A549 (cell line): ENCODE measurements at regions of chr9 and their contacts with region 1.

Region 1: GRCh38 chr9:126939821-126940221 is 25.2 kb downstream of the RALGPS1 start:
- DNase-seq: peak; percentile 46 to 50
- ATAC-seq: peak; percentile 48 to 57; a peak in 4 of 6 replicates
- H3K4me3 ChIP-seq: no peak overlapping the region
- H3K27ac ChIP-seq: no peak overlapping the region
- H3K4me1 ChIP-seq: peaks cover 12% of the 10 kb centered on the region
- CTCF ChIP-seq: no peak
- EP300 ChIP-seq: no peak
- POLR2A ChIP-seq: no peak
- RAD21 ChIP-seq: no peak

Region 2: GRCh38 chr9:126927419-126927818 is 12.4 kb before region 1 on chr9:
- CTCF ChIA-PET with region 1: interaction called, 43 read pairs
- POLR2A ChIA-PET with region 1: no interaction called
- DNase-seq: no peak
- ATAC-seq: no peak
- H3K4me3 ChIP-seq: no peak overlapping the region
- H3K27ac ChIP-seq: no peak overlapping the region
- H3K4me1 ChIP-seq: no peaks in the 10 kb centered on the region
- CTCF ChIP-seq: no peak
- EP300 ChIP-seq: no peak
- POLR2A ChIP-seq: no peak
- RAD21 ChIP-seq: no peak

Region 3: DNA sequence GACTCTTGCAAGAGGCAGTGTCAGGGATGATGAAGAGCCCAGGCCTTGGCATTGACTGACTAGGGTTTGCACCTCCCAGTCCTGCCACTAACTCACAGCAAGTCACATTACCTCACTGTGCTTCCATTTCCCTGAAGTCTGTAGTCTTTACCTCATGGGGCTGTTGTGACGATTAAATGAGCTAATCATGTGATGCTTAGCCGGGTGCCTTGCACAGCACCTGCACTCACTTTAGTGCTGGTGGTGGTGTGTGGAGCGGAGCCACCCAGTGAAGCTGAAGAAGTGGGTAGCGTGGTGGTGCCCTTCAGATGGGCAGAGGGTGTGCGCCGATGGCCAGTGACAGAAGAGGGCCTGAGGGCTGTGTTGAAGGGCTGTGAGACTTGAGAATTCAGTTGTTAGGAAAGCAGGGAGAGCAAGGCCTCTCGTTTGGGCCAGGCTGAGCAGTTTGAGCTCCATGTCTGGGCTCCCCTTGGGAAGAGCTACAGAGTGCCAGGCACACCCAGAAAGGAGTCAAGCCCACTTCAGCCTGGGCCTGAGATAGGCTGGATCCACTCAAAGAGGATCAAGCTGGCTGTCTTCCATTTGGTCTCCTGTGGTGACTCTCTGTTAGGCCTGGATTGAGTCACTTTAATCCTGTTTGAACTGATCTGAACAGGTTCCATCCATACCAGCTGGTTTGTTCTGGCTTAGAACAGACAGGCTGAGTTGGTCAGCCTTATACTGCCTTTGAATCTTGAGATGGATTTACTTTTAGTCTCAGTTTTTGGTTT is 17.3 kb after region 1 on chr9:
- CTCF ChIA-PET with region 1: interaction called, 59 read pairs
- POLR2A ChIA-PET with region 1: no interaction called
- DNase-seq: peak; percentile 17 to 26
- ATAC-seq: peak; percentile 65 to 68
- H3K4me3 ChIP-seq: no peak overlapping the region
- H3K27ac ChIP-seq: peak overlapping the region in 1 of 2 experiments; percentile 7; a peak in 1 of 6 replicates
- H3K4me1 ChIP-seq: peaks cover 14% of the 10 kb centered on the region
- CTCF ChIP-seq: no peak
- EP300 ChIP-seq: no peak
- POLR2A ChIP-seq: no peak
- RAD21 ChIP-seq: no peak

Region 4: GRCh38 chr9:126965541-126966428 is 26.0 kb after region 1 on chr9:
- CTCF ChIA-PET with region 1: interaction called, 59 read pairs
- POLR2A ChIA-PET with region 1: no interaction called
- DNase-seq: peak; percentile 67 to 80
- ATAC-seq: peak; percentile 99 to 100
- H3K4me3 ChIP-seq: no peak overlapping the region
- H3K27ac ChIP-seq: no peak overlapping the region
- H3K4me1 ChIP-seq: peaks cover 4% of the 10 kb centered on the region; the same call in 1 of the 3 replicates
- CTCF ChIP-seq: peak; percentile 87
- EP300 ChIP-seq: no peak
- POLR2A ChIP-seq: no peak
- RAD21 ChIP-seq: peak; percentile 91 to 92

Region 5: GRCh38 chr9:127159325-127159801 is 219.5 kb after region 1 on chr9:
- CTCF ChIA-PET with region 1: interaction called, 22 read pairs
- POLR2A ChIA-PET with region 1: no interaction called
- DNase-seq: peak; percentile 19 to 74
- ATAC-seq: peak; percentile 87
- H3K4me3 ChIP-seq: no peak overlapping the region
- H3K27ac ChIP-seq: peak overlapping the region; percentile 36 to 60
- H3K4me1 ChIP-seq: peaks cover 25% of the 10 kb centered on the region
- CTCF ChIP-seq: no peak
- EP300 ChIP-seq: no peak
- POLR2A ChIP-seq: no peak
- RAD21 ChIP-seq: no peak

Region 6: DNA sequence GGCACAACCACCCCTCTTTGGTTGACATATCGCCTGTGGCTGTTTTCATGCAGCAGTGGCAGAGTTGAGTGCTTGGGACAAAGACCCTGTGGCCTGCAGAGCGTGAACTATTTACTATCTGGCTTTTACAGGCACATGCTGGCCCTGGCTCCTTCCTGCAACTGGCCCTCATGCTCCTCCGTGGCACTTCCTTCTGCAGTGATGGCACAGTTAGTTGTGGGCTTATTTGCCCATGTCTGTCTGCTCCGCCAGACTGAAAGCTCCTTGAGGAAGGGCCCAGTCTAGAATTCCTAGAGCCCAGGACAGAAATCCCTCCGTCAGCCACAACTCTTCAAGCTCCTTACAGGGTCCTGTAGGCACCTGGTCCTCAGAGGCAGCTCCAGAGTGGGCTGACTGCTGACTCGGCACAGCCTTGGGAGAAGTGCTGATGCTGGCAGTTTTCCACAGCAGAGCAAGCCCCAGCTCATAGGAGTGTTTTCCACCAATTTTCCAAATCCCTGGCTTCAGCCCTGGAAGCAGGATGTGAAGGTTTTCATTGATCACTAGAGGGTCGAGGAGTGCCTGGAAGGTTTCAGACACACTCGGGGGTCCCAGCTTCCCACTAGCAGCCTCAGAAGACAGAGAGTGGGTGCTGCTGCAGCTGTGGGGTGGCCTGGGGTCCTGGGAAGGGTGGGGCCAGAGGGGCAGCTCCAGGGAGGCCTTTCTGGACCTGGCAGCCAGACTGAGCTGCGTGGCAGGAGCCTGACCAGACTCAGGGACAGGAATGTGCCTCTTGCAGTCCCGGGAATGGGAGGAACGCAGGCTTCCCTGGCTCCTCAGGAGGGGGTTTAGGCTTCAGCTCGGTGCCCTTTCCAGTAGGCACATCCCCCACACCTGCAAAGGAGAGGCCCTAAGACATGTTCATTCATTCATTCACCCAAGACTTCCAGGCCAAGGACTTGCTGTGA is 239.1 kb after region 1 on chr9:
- CTCF ChIA-PET with region 1: interaction called, 15 read pairs
- POLR2A ChIA-PET with region 1: no interaction called
- DNase-seq: no peak
- ATAC-seq: no peak
- H3K4me3 ChIP-seq: no peak overlapping the region
- H3K27ac ChIP-seq: no peak overlapping the region
- H3K4me1 ChIP-seq: no peaks in the 10 kb centered on the region
- CTCF ChIP-seq: no peak
- EP300 ChIP-seq: no peak
- POLR2A ChIP-seq: no peak
- RAD21 ChIP-seq: no peak

Region 7: GRCh38 chr9:127214421-127215267 is 274.8 kb after region 1 on chr9:
- CTCF ChIA-PET with region 1: interaction called, 46 read pairs
- POLR2A ChIA-PET with region 1: no interaction called
- DNase-seq: peak; percentile 58 to 87
- ATAC-seq: peak; percentile 81 to 87
- H3K4me3 ChIP-seq: no peak overlapping the region
- H3K27ac ChIP-seq: no peak overlapping the region
- H3K4me1 ChIP-seq: no peaks in the 10 kb centered on the region
- CTCF ChIP-seq: peak; percentile 79
- EP300 ChIP-seq: no peak
- POLR2A ChIP-seq: no peak
- RAD21 ChIP-seq: peak; percentile 77 to 80